ENCODE measurements at regions of chr17 and their contacts with region 1.

Region 1: GRCh38 chr17:14725729-14726128 is 424.8 kb downstream of the HS3ST3B1 start:
- DNase-seq: no peak
- ATAC-seq: no peak
- H3K4me3 ChIP-seq: no peak overlapping the region
- H3K27ac ChIP-seq: no peak overlapping the region
- H3K4me1 ChIP-seq: peaks cover 7% of the 10 kb centered on the region; the same call in 1 of the 3 replicates
- CTCF ChIP-seq: no peak
- EP300 ChIP-seq: no peak
- POLR2A ChIP-seq: no peak
- RAD21 ChIP-seq: no peak

Region 2: GRCh38 chr17:14672830-14673229 is 52.9 kb before region 1 on chr17:
- CTCF ChIA-PET with region 1: no interaction called
- POLR2A ChIA-PET with region 1: no interaction called
- DNase-seq: no peak
- ATAC-seq: no peak
- H3K4me3 ChIP-seq: no peak overlapping the region
- H3K27ac ChIP-seq: no peak overlapping the region
- H3K4me1 ChIP-seq: no peaks in the 10 kb centered on the region
- CTCF ChIP-seq: no peak
- EP300 ChIP-seq: no peak
- POLR2A ChIP-seq: no peak
- RAD21 ChIP-seq: no peak

Region 3: DNA sequence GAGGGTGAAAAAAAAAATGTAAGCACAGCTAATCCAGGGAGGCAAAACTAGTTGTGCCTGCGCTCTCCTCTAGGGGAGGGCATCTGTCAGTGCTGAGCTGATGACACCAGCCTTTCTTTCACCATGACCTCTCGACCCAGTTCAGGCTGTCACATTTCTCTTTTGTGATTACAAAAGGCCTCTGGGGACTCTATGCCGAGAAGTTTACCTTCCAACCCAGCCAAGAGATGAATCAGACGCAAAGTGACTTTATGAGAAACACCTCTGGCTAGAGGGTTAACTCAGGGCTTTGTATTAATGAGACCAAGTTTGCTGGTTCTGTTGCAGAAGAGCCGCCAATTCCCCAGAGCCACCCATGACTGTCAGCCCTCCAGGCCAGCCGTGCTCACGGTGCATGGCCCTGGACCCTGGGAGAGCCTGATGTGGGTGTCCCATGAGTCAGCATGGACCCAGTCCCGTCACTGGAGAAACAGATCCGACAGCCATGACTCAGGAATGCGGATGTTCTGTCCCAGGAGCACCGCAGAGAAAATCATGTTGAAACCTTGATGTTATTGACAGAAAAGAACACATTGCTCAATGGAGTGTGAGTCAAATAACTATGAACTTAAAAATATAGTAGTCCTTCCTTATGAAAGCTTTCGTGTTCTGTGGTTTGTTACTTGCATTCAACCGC is 12.4 kb after region 1 on chr17:
- CTCF ChIA-PET with region 1: interaction called, 10 read pairs
- POLR2A ChIA-PET with region 1: no interaction called
- DNase-seq: peak; percentile 99
- ATAC-seq: peak; percentile 97 to 99
- H3K4me3 ChIP-seq: peak overlapping the region; percentile 10; the same call in 1 of the 3 replicates
- H3K27ac ChIP-seq: peak overlapping the region; percentile 87 to 90
- H3K4me1 ChIP-seq: peaks cover 51% of the 10 kb centered on the region
- CTCF ChIP-seq: peak; percentile 38; the same call in 2 of the 3 replicates
- EP300 ChIP-seq: peak; percentile 97 to 98
- POLR2A ChIP-seq: no peak
- RAD21 ChIP-seq: peak; percentile 49 to 71

Measured in A549 (cell line).